ENCODE measurements at regions of chr22 and their contacts with region 1.

Region 1: GRCh38 chr22:39319270-39320022 is at the start of gene RPL3:
- DNase-seq: peak; percentile 96
- H3K4me3 Mint-ChIP-seq: peak within 1 kb of the TSS; percentile 99
- H3K27ac Mint-ChIP-seq: peak within 1 kb of the TSS; percentile 99
- H3K4me1 Mint-ChIP-seq: peaks cover 42% of the 10 kb centered on the region
- H3K27me3 Mint-ChIP-seq: no peaks in the 10 kb centered on the region
- total RNA-seq, gene RPL3: 1,905 and 1,941 TPM in 2 replicates

Region 2: GRCh38 chr22:38872172-38872830 is 447.1 kb before region 1 on chr22 and contains the start of gene CBX6:
- intact Hi-C with region 1: loop called (anchors 1 kb)
- DNase-seq: peak; percentile 94
- H3K4me3 Mint-ChIP-seq: peak within 1 kb of the TSS; percentile 89
- H3K27ac Mint-ChIP-seq: peak within 1 kb of the TSS; percentile 91
- H3K4me1 Mint-ChIP-seq: peaks cover 59% of the 10 kb centered on the region
- H3K27me3 Mint-ChIP-seq: peaks cover 2% of the 10 kb centered on the region
- total RNA-seq, gene CBX6: 171 and 178 TPM in 2 replicates

Region 3: DNA sequence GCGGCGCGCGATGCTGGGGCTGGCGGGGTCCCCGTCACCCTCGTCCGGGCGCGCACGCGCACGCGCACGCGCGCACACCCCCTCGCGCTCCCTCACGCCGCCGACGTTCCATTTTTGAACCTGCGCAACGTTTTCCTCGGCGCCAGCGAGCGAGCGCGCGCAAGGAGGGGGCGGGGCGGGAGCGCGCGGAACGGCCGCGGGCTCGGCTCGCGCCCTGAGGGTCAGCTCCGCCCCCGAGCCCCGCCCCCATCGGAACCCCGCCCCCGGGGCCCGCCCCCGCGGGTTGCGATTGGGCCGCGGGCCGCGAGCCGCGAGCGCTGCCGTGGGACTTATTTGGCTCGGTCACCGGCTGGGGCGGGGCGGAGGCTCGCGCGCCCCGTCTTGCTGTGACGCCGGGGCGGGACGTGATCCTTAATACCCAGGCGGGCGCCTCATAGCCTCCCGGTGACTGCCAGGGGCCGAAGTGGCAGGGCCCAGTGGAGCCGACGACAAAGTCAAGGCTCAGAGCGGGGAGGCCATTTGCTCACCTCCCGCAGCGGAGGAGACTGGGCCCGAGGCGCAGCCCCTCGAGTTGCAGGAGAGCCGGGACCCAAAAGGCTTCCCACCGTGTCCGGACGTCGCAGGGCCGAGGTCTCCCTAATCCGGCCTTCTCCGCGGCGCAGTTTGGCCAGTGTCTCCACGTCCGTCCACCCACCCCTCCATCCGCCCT is 166.8 kb before region 1 on chr22 and contains the start of gene CBX7:
- intact Hi-C with region 1: loop called (anchors 1 kb)
- DNase-seq: peak; percentile 93
- H3K4me3 Mint-ChIP-seq: peak within 1 kb of the TSS; percentile 89
- H3K27ac Mint-ChIP-seq: peak within 1 kb of the TSS; percentile 74
- H3K4me1 Mint-ChIP-seq: peaks cover 32% of the 10 kb centered on the region
- H3K27me3 Mint-ChIP-seq: peaks cover 23% of the 10 kb centered on the region
- total RNA-seq, gene CBX7: 12.7 and 13.8 TPM in 2 replicates

Region 4: DNA sequence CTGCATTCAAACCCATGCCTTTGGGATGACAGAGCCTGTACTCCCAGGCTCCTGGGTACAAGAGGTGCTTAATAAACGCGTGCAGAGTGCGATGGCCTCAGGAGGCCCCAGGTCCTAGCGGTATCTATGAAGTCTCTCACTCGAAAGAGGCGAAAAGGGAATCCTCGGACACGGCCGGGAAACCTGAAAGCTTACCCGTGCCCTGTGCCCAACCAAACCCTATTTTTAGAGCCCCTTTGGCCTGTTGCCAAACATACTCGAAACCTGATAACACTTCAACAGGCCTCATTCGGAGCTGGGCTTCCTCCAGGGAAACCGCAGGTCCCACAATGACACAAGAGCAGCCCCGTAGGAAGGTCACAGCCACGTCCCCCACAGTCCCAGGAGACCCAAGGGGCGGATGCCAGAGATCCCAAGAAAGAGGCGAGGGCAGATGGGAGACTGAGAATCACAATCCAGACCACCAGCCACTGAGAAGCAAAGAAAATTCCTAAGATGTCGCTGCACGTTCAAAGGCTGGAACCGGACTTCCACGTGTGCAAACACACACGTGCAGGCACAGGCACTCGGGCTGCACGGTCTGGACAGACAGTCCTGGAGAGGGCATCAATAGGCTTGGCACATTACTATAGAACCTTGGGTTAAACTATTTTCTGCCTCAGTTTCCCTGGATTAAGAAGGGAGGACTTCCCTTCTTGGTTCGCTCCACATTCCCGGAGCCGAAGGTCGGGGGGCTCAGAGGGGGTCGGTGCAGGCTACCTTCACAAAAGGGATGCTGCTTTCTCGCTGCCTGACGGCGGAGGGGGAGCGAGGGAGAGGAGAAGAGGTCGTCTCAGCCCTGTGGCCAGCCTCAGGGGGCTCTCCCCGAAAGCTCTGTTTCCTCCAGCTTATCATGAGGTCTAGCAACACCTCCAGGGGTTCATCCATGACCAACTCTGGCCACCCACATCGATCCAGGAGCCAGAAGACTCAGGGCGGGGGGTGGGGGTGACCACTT is 82.8 kb before region 1 on chr22:
- intact Hi-C with region 1: loop called (anchors 5 kb)
- DNase-seq: peak; percentile 17
- H3K4me3 Mint-ChIP-seq: peak overlapping the region; percentile 40
- H3K27ac Mint-ChIP-seq: no peak overlapping the region
- H3K4me1 Mint-ChIP-seq: peaks cover 38% of the 10 kb centered on the region
- H3K27me3 Mint-ChIP-seq: peaks cover 66% of the 10 kb centered on the region

Region 5: DNA sequence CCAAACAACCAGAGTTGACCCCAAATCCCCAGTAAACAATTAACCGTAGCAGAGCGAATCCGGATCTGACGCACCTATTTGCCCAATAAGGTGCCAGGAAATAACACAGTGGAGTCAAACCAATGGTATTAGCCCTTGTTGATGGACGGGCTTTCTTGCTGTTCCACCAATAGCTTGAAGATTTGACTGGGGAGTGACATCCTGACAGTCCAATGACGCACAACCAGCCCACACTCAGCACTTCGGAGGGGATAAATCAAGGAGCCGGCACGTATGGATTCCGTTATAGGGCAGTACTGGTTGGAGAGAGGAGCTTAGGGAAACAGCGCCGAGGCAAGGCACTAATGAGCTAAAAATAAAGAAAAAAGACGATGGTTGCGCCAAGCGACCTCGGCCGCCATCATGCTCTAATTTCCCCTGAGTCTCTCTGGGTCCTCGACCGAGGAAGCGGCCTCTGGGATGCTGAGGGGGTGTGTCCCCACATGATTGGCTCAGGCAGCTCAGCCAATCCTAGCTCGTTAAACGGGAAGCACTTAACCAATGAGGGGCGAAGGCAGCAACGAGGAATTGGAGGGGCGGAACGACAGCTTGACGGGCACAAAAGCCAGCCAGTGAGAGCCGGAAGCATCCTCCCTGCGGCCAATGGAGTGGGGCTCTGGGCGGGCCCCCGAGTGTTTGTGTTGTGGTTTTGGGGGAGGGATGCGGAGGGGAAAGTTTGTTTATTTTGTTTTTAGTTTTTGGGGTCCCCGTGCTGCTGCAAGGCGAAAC is 724.8 kb after region 1 on chr22:
- intact Hi-C with region 1: loop called (anchors 1 kb)
- DNase-seq: peak; percentile 98
- H3K4me3 Mint-ChIP-seq: peak overlapping the region; percentile 90
- H3K27ac Mint-ChIP-seq: peak overlapping the region; percentile 100
- H3K4me1 Mint-ChIP-seq: peaks cover 17% of the 10 kb centered on the region
- H3K27me3 Mint-ChIP-seq: peaks cover 3% of the 10 kb centered on the region